ENCODE measurements at regions of chr2 and their contacts with region 1.

Region 1: GRCh38 chr2:137865954-137866540 is 98.2 kb upstream of the HNMT start:
- DNase-seq: no peak
- H3K4me3 Mint-ChIP-seq: no peak overlapping the region
- H3K27ac Mint-ChIP-seq: no peak overlapping the region
- H3K4me1 Mint-ChIP-seq: no peaks in the 10 kb centered on the region
- H3K27me3 Mint-ChIP-seq: peaks cover 5% of the 10 kb centered on the region

Region 2: GRCh38 chr2:138373993-138374408 is 508.0 kb after region 1 on chr2:
- intact Hi-C with region 1: loop called (anchors 1 kb)
- DNase-seq: no peak
- H3K4me3 Mint-ChIP-seq: no peak overlapping the region
- H3K27ac Mint-ChIP-seq: no peak overlapping the region
- H3K4me1 Mint-ChIP-seq: no peaks in the 10 kb centered on the region
- H3K27me3 Mint-ChIP-seq: no peaks in the 10 kb centered on the region

Region 3: DNA sequence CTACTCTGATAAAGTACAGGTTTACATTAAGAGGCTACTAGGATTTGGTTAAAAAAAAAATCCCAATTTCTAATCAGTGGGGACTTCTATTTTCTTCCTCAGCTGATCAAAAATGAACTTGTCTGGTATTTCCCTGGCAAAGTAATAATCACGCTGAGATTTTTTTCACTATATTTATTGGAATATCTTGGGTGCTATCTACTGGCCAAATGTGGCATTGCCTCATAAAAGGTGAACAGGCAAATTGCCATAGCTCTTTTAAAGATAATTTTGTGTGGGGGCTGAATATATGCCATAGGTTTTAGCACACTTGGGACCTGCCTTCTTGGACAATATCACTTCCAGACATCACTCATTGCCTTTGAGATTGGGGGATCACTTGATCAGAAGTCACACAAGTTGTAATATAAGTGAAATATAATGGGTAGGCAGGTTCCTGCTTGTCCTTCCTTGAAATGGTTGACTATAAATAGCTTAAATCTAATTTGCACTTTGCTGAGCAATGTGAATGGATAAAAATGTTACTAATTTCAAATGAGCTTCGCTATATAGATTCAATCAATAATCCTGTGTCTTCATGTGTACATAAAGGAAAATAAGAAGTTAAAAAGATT is 921.1 kb after region 1 on chr2:
- intact Hi-C with region 1: loop called (anchors 1 kb)
- DNase-seq: no peak
- H3K4me3 Mint-ChIP-seq: no peak overlapping the region
- H3K27ac Mint-ChIP-seq: no peak overlapping the region
- H3K4me1 Mint-ChIP-seq: no peaks in the 10 kb centered on the region
- H3K27me3 Mint-ChIP-seq: peaks cover 7% of the 10 kb centered on the region

Region 4: DNA sequence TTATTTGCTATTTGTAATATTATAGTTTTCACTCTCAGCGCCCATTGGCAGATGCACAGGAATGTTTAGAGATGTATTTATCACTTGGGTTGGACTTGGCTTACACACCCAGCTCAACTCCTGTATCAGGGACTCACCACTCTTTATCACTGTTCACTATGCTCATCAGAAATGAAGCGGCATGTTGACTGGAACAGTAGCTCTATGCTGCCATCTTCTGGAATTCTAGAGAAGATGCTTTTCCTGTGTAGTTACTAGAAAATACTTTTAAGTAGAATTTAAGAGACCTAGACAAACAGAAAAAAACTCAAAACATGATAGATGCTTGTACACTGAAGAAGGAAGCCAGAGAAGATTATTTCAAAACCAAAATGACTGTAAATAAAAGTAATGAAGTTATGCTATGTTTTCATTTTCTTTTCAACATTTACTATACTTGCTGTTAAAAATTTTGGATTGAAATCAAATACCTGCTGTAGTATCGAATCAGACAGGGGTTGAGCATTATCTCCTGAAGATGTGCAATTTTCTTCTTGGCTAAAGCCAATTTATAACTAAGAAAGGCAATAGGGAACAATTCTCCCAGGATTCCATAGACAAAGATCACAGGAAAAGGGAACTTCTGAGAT is 961.5 kb after region 1 on chr2:
- intact Hi-C with region 1: loop called (anchors 1 kb)
- DNase-seq: no peak
- H3K4me3 Mint-ChIP-seq: no peak overlapping the region
- H3K27ac Mint-ChIP-seq: no peak overlapping the region
- H3K4me1 Mint-ChIP-seq: no peaks in the 10 kb centered on the region
- H3K27me3 Mint-ChIP-seq: peaks cover 8% of the 10 kb centered on the region

Measured in activated T-helper 1 cell treated with anti-CD3 and anti-CD28 coated beads, Interleukin-12 subunit alpha, Interleukin-12 subunit beta, Interleukin-2, Interleukin-4 antibody, amounts not matched to agents 30 ng/mL and 10 ng/mL and 1 ng/mL, durations not matched to agents 14 hours and 24 hours and 36 hours (primary cell).